ENCODE measurements at regions of chr12 and their contacts with region 1.

Region 1: GRCh38 chr12:112012775-112013600 is at the starts of genes ERP29 and TMEM116:
- DNase-seq: peak; percentile 99
- H3K4me3 Mint-ChIP-seq: peak within 1 kb of the TSS; percentile 81
- H3K27ac Mint-ChIP-seq: peak within 1 kb of the TSS; percentile 81
- H3K4me1 Mint-ChIP-seq: peaks cover 33% of the 10 kb centered on the region
- H3K27me3 Mint-ChIP-seq: no peaks in the 10 kb centered on the region
- CTCF ChIP-seq: peak; percentile 46
- total RNA-seq, gene ERP29: 124 and 126 TPM in 2 replicates
- total RNA-seq, gene TMEM116: 13.9 and 15.2 TPM in 2 replicates

Region 2: DNA sequence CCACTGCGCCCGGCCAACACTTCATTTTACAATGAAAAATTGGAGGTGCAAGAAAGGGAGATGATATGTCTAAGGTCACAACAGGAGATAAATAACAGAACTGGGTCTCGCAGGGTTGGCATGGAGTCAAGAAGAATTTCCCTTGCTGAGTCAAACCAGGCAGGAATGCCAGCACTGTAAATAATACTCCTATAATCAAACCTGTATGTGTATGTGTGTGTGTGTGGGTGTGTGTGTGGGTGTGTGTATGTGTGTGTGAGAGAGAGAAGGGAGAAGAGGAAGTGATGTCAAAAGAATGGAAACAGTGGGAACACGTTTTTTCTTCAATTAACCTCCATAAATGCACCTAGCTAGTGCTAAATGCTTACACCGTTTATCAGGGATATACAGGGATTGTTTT is 70.4 kb before region 1 on chr12:
- CTCF ChIA-PET with region 1: interaction called, 12 read pairs
- POLR2A ChIA-PET with region 1: interaction called, 10 read pairs
- intact Hi-C with region 1: loop called (anchors 1 kb)
- DNase-seq: peak; percentile 50
- H3K4me3 Mint-ChIP-seq: no peak overlapping the region
- H3K27ac Mint-ChIP-seq: no peak overlapping the region
- H3K4me1 Mint-ChIP-seq: peaks cover 7% of the 10 kb centered on the region
- H3K27me3 Mint-ChIP-seq: no peaks in the 10 kb centered on the region
- CTCF ChIP-seq: no peak

Region 3: DNA sequence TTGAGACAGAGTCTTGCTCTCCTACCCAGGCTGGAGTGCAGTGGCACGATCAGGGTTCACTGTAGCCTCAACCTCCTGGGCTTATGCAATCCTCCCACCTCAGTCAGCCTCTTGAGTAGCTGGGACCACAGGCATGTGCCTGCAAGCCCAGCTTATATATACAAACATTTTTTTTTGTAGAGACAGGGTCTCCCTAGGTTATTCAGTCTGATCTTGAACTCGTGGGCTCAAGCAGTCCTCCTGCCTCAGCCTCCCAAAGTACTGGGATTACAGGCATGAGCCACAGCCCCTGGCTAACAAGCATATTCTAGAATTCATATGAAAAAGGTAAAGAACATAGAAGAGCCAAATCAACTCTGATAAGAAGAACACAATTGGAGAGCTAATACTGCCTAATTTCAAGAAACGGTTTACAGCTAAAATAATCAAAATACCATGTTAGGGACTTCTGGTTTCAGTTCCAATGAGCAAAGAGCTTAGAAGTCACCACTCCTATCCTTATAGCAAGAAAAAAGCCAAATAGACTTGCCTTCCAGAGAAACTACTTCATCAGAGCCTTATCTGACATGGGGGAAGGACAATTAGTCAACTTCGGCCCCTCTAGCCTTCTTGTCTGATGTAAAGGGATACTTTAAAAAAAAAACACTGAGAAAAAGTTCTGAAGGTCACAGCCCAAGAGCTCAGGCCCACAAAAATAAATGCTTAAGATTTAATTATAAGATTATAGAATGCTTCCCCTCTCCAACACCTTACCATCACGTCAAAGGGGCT is 37.6 kb before region 1 on chr12:
- CTCF ChIA-PET with region 1: interaction called, 4 read pairs
- POLR2A ChIA-PET with region 1: interaction called, 10 read pairs
- intact Hi-C with region 1: no loop called
- DNase-seq: peak; percentile 34
- H3K4me3 Mint-ChIP-seq: no peak overlapping the region
- H3K27ac Mint-ChIP-seq: no peak overlapping the region
- H3K4me1 Mint-ChIP-seq: peaks cover 5% of the 10 kb centered on the region
- H3K27me3 Mint-ChIP-seq: no peaks in the 10 kb centered on the region
- CTCF ChIP-seq: no peak

Region 4: GRCh38 chr12:112025808-112026375 is 12.9 kb after region 1 on chr12:
- CTCF ChIA-PET with region 1: interaction called, 11 read pairs
- POLR2A ChIA-PET with region 1: interaction called, 29 read pairs
- intact Hi-C with region 1: no loop called
- DNase-seq: no peak
- H3K4me3 Mint-ChIP-seq: no peak overlapping the region
- H3K27ac Mint-ChIP-seq: peak overlapping the region; percentile 73
- H3K4me1 Mint-ChIP-seq: peaks cover 6% of the 10 kb centered on the region
- H3K27me3 Mint-ChIP-seq: no peaks in the 10 kb centered on the region
- CTCF ChIP-seq: no peak

Region 5: GRCh38 chr12:112116232-112117060 is 103.5 kb after region 1 on chr12:
- CTCF ChIA-PET with region 1: no interaction called
- POLR2A ChIA-PET with region 1: interaction called, 10 read pairs
- intact Hi-C with region 1: no loop called
- DNase-seq: peak; percentile 35
- H3K4me3 Mint-ChIP-seq: peak overlapping the region; percentile 28
- H3K27ac Mint-ChIP-seq: peak overlapping the region; percentile 90
- H3K4me1 Mint-ChIP-seq: peaks cover 18% of the 10 kb centered on the region
- H3K27me3 Mint-ChIP-seq: no peaks in the 10 kb centered on the region
- CTCF ChIP-seq: no peak

Region 6: DNA sequence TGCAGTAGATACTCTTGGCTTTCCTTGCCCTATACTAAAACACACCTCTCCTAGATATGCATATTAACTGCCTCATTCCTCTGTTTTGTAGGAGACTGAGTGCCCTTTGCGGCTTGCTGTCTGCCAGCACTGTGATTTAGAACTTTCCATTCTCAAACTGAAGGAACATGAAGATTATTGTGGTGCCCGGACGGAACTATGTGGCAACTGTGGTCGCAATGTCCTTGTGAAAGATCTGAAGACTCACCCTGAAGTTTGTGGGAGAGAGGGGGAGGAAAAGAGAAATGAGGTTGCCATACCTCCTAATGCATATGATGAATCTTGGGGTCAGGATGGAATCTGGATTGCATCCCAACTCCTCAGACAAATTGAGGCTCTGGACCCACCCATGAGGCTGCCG is 127.7 kb after region 1 on chr12:
- CTCF ChIA-PET with region 1: no interaction called
- POLR2A ChIA-PET with region 1: no interaction called
- intact Hi-C with region 1: no loop called
- DNase-seq: no peak
- H3K4me3 Mint-ChIP-seq: no peak overlapping the region
- H3K27ac Mint-ChIP-seq: no peak overlapping the region
- H3K4me1 Mint-ChIP-seq: no peaks in the 10 kb centered on the region
- H3K27me3 Mint-ChIP-seq: no peaks in the 10 kb centered on the region
- CTCF ChIP-seq: no peak